ENCODE measurements at regions of chr6 and their contacts with region 1.

Region 1: GRCh38 chr6:31079656-31080261 is 32.6 kb downstream of the C6orf15 start:
- DNase-seq: peak; percentile 73
- H3K4me3 ChIP-seq: peak overlapping the region in 1 of 3 experiments; percentile 40
- H3K27ac ChIP-seq: no peak overlapping the region
- H3K4me1 ChIP-seq: peaks cover 4% of the 10 kb centered on the region
- H3K27me3 ChIP-seq: peaks cover 2 to 3% of the 10 kb centered on the region in 2 experiments
- CTCF ChIP-seq: peak; percentile 68 to 80
- POLR2A ChIP-seq: no peak

Region 2: DNA sequence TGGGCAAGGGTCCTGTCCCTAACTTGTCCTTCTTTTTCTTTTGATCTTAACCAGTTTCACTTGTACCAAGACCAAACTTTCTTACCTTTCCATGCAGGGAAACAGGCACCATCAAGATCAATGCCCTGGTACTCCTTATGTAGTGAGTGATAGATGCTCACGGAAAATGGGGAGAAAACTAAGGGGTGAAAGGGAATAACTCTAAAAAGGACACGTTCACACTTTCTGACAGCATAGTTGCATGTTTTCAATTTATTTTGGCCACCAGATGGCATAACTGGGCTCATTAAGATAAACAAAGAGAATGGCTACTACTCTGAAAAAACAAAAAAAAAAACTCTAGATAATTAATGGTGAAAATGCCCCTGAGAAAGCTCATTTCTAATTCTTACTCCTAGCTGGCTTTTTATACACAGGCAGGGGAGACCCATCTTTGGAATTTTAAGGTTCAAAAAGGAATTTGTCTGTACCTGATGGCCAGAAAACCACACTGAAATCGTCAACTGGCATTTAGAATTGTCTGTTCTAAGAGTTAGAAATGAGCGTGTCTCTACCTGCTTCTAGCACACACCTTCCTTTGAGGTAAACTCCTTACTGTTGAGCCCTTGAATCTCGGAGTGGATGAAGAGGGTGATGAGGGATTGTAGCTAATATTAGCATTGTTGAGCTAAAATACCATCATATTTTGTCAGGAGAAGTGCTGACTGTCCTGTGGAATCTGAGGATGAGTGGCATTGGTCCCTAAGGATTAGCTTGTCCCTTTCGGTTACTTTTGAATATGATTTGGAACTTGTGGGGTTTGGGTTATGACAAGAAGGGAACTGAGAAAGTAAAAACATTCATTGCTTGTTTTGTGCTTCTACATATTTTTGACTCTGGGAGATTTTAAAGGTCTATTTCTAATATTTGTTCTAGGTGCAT is 257.6 kb before region 1 on chr6:
- CTCF ChIA-PET with region 1: interaction called, 42 read pairs
- POLR2A ChIA-PET with region 1: no interaction called
- dilution Hi-C with region 1: no loop called
- intact Hi-C with region 1: no loop called
- DNase-seq: peak; percentile 75
- H3K4me3 ChIP-seq: no peak overlapping the region
- H3K27ac ChIP-seq: peak overlapping the region; percentile 21
- H3K4me1 ChIP-seq: peaks cover 36% of the 10 kb centered on the region
- H3K27me3 ChIP-seq: no peaks in the 10 kb centered on the region
- CTCF ChIP-seq: peak; percentile 49 to 52
- POLR2A ChIP-seq: no peak

Region 3: GRCh38 chr6:30907758-30908591 is 171.8 kb before region 1 on chr6 and contains the start of gene GTF2H4:
- CTCF ChIA-PET with region 1: interaction called, 141 read pairs
- POLR2A ChIA-PET with region 1: no interaction called
- dilution Hi-C with region 1: no loop called
- intact Hi-C with region 1: no loop called
- DNase-seq: peak; percentile 99
- H3K4me3 ChIP-seq: peak within 1 kb of the TSS; percentile 94 to 96 (median 94)
- H3K27ac ChIP-seq: peak within 1 kb of the TSS; percentile 7
- H3K4me1 ChIP-seq: peaks cover 9% of the 10 kb centered on the region
- H3K27me3 ChIP-seq: no peaks in the 10 kb centered on the region
- CTCF ChIP-seq: no peak
- POLR2A ChIP-seq: no peak
- total RNA-seq, gene GTF2H4: 51.0 and 52.6 TPM in 2 replicates

Region 4: DNA sequence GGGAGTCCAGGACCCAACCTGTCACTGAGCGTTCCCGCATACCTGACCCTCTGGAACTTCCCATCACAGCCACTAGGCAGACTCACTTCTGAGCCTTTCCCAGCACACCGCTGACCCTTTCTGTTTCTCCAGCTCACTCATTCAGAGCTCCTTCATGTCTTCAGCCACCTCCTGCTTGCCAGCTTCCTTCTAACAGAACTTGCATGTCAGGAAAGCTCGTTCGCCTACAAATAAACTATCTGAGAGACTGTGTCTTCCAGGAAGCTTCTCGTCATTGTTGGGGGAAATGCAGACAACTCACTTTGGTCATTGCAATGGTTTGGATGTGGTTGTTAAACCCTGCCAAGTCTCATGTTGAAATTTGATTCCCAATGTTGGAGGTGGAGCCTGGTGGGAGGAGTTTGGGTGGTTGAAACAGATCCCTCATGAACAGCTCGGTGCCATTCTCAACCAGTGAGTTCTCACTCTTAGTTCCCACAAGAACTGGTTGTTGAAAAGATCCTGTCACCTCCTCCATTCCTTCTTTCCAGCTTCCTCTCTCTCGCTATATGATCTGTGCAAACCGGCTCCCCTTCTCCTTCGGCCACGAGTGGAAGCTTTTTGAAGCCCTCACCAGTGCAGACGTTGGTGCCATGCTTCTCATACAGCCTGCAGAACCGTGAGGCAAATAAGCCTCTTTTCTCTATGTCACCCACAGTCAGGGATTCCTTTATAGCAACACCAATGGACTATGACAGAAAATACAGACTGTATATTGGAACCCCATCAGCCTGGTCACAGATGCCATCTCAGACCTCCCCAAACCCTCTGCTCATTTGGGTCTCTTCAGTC is 97.6 kb before region 1 on chr6:
- CTCF ChIA-PET with region 1: interaction called, 11 read pairs
- POLR2A ChIA-PET with region 1: no interaction called
- dilution Hi-C with region 1: no loop called
- intact Hi-C with region 1: no loop called
- DNase-seq: peak; percentile 43
- H3K4me3 ChIP-seq: no peak overlapping the region
- H3K27ac ChIP-seq: no peak overlapping the region
- H3K4me1 ChIP-seq: no peaks in the 10 kb centered on the region
- H3K27me3 ChIP-seq: peaks cover 14 to 16% of the 10 kb centered on the region in 2 experiments
- CTCF ChIP-seq: peak in 1 of 2 donors; percentile 11
- POLR2A ChIP-seq: no peak

Region 5: DNA sequence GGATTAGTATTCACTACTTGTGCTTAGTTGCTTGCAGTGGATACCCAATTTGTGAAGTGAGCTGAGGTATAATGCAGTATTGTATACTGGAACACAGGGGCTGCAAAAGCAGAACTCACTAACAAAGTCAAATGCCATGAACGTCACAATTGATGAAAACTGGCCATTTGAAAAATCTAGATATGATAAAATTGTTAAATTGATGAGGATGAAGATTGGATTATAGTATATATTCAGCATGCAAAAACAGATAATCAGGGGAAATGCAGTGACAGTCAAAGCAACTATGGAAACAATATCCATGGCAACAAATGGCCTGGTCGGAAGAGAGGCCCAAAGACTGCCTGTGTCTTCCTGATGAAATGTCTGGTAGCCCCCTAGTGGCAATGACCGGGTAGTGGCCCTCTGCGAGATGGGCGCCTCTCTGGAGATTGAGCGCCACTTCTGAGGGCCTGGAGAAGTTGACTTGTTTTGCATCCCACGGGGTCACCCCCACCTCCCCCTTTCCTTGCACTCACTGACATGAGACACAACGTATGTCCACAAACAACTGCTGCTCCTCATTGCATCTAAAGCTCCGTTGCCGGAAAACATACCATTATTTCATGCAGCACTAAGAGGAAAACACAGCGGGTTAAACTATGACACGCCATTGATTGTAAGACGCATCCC is 11.0 kb before region 1 on chr6:
- CTCF ChIA-PET with region 1: interaction called, 56 read pairs
- POLR2A ChIA-PET with region 1: no interaction called
- dilution Hi-C with region 1: no loop called
- intact Hi-C with region 1: no loop called
- DNase-seq: peak; percentile 73
- H3K4me3 ChIP-seq: no peak overlapping the region
- H3K27ac ChIP-seq: no peak overlapping the region
- H3K4me1 ChIP-seq: peaks cover 6% of the 10 kb centered on the region
- H3K27me3 ChIP-seq: peaks cover 5 to 8% of the 10 kb centered on the region in 2 experiments
- CTCF ChIP-seq: peak; percentile 82 to 91
- POLR2A ChIP-seq: no peak

Region 6: DNA sequence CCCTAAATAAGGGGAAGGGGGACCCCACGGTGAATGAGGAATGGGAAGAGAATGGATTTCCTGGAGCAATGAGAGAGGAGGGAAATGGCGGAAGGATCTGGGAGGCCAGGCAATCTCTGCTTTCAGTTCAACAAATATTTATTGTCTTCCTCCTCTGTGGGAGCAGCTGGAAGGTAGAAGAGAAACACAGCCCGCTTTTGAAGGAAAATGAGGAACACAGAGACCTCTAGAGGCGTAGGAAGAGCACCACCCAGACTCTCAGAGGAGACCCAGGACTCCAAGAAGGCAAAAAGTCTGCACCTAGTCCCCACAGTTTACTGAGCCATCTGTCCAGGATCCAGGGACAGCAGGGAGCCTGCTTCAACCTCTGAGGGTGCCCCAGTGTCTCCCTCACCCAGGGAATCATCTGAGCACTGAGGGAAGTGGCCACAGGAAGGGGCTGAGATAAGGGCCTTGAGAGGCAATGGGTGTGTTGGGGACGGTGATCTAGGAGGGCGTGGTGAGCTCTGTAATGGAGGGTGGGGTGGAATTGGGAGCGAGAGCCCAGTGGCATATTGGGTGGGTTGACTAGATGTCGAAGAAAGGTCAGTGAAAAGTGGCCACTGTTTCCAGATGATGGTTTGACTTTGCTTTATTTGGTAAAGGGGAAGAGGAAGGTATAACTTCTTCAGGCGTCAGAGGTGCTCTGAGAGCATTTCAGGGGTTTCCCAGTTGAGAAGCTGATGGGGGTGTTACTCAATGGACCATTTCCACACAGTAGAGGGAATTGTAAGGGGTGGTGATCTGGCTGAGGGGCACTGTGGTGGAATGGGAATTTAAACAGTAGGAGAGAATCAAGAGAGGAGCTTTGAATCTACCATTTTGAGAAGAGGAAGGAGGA is 35.5 kb after region 1 on chr6:
- CTCF ChIA-PET with region 1: interaction called, 57 read pairs
- POLR2A ChIA-PET with region 1: no interaction called
- dilution Hi-C with region 1: no loop called
- intact Hi-C with region 1: no loop called
- DNase-seq: peak; percentile 51
- H3K4me3 ChIP-seq: peak overlapping the region in 1 of 3 experiments; percentile 3
- H3K27ac ChIP-seq: peak overlapping the region; percentile 51
- H3K4me1 ChIP-seq: peaks cover 21% of the 10 kb centered on the region
- H3K27me3 ChIP-seq: peaks cover 4 to 6% of the 10 kb centered on the region in 2 experiments
- CTCF ChIP-seq: peak; percentile 13 to 20
- POLR2A ChIP-seq: no peak

Region 7: DNA sequence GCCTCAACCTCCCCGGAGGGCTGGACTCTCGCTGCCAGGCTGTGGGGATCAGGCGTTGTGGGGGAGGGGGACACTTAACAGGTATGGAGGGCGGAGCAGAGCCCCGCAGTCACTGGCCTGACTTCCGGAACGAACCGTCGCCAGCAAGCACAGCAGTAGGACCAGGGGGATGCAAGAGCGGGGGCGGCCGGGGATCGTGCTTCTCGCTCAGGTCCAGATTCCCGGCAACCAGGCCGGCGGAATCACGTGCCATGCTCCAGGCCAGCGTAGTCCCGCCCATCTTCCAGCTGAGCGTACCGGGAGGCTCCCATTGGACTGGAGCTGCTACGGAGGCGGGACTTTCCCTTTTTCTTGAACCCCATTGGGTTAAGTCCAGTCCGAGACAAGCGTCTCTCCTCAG is 100.7 kb after region 1 on chr6:
- CTCF ChIA-PET with region 1: no interaction called
- POLR2A ChIA-PET with region 1: no interaction called
- dilution Hi-C with region 1: no loop called
- intact Hi-C with region 1: no loop called
- DNase-seq: peak; percentile 89
- H3K4me3 ChIP-seq: peak overlapping the region in 2 of 3 experiments; percentile 12 to 53
- H3K27ac ChIP-seq: no peak overlapping the region
- H3K4me1 ChIP-seq: peaks cover 6% of the 10 kb centered on the region
- H3K27me3 ChIP-seq: no peaks in the 10 kb centered on the region
- CTCF ChIP-seq: no peak
- POLR2A ChIP-seq: no peak

Measured in endothelial cell of umbilical vein (primary cell).